Posterior vena cava (tissue), 2 donors: ENCODE measurements at regions of chr3 and their contacts with region 1.

Region 1: GRCh38 chr3:64340641-64341101 is 115.4 kb upstream of the PRICKLE2 start:
- DNase-seq: no peak

Region 2: GRCh38 chr3:64111868-64112267 is 228.8 kb before region 1 on chr3:
- intact Hi-C with region 1: no loop called
- DNase-seq: no peak

Region 3: DNA sequence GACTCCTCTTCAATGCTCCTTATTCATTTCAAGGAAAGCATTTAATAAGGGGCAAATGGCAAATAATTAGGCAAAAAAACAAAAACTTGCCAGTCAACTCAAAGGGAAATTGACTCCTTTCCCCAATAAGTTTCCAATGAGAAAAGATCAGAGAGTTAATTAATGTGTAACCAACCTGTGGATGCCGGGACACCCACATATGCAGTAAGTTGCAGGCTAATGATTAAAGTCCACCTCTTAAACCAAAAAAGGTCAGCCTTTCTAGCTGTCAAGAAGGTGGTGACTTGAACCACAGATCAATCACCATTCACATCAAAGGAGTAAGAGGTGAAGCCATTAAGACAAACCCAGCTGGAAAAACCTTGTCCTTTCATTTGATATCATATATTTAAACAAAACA is 92.4 kb before region 1 on chr3:
- intact Hi-C with region 1: no loop called
- DNase-seq: no peak

Region 4: GRCh38 chr3:64321747-64322146 is 18.9 kb before region 1 on chr3:
- intact Hi-C with region 1: loop called in 1 of 2 experiments (anchors 1 kb)
- DNase-seq: no peak